Caco-2 (cell line): ENCODE measurements at regions of chr7 and their contacts with region 1.

Region 1: DNA sequence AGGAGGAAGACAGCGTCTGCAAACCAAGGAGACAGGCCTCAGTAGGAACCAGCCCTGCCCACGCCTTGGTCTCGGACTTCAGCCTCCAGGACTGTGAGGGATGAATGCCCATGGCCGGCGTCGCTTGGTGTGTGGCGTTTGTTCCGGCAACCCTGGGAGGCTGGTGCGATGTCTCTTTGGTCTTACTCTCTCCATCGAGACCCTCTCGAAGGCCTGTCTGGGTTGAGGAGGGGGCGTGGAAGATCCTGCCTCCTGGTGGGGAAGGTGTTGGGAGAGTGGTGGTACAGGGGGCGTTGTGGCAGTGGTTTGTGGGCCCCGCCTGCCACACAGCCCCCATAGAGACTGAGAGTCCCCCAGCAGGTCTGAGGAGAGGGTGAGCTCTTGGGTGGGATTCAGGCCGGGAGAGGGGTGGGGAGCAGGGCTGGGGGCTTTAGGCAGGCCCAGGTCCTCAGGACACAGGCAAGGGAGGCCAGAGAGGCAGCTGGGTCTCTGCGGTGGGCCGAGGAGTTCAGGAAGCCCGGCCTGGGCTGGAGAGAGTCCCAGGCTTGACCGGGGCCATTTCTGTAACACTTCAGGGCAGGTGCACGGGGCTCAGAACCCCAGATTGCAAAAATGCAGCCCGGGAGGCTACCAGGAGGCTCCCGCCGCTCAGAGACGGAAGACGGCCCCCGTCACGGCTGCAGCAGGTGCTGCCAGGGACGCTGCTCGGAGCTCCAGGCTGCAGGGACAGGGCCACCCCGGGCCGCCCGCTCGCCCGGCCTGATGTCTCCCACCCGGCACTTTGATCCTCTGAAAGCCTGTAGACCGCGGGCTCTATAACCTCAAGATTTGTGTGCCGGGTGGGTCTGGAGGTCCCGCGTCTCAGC is 33.7 kb upstream of the PSMG3 start:
- DNase-seq: no peak
- H3K4me3 ChIP-seq: no peak overlapping the region
- H3K4me3 Mint-ChIP-seq: no peak overlapping the region
- H3K27ac Mint-ChIP-seq: no peak overlapping the region
- H3K4me1 ChIP-seq: 0 out of 2 replicates have a peak, but pooled peaks cover 5% of the 10 kb centered on the region
- H3K4me1 Mint-ChIP-seq: no peaks in the 10 kb centered on the region
- H3K27me3 ChIP-seq: no peaks in the 10 kb centered on the region
- H3K27me3 Mint-ChIP-seq: peaks cover 14% of the 10 kb centered on the region
- CTCF ChIP-seq: no peak

Region 2: DNA sequence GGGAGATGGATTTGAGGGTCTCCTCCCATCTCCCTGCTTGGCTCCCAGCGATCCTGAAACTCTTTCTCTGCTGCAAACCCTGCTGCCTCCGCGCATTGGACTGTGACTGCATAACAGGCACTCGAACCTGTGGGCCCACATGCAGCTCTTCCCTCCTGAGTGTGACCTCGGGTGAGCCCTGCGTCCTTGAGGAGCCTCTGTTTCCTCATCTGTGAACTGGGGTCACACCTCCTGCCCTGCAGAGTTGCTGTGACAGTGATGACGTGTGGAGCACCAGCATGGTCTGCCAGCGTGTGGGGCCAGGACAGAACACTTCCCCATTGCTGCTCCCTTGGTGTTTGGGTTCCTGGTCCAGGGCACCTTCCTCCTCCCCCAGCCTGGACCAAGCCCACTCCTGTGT is 13.2 kb after region 1 on chr7:
- CTCF ChIA-PET with region 1: interaction called, 10 read pairs
- POLR2A ChIA-PET with region 1: no interaction called
- intact Hi-C with region 1: no loop called
- DNase-seq: no peak
- H3K4me3 ChIP-seq: no peak overlapping the region
- H3K4me3 Mint-ChIP-seq: no peak overlapping the region
- H3K27ac Mint-ChIP-seq: no peak overlapping the region
- H3K4me1 ChIP-seq: no peaks in the 10 kb centered on the region
- H3K4me1 Mint-ChIP-seq: no peaks in the 10 kb centered on the region
- H3K27me3 ChIP-seq: no peaks in the 10 kb centered on the region; the same call in 1 of the 2 replicates
- H3K27me3 Mint-ChIP-seq: no peaks in the 10 kb centered on the region
- CTCF ChIP-seq: no peak